Head of caudate nucleus (tissue), 42 donors: ENCODE measurements at regions of chr3 and their contacts with region 1.

Region 1: GRCh38 chr3:13884851-13885703 is 5.2 kb upstream of the WNT7A start:
- DNase-seq: peak in 33 of 42 donors; percentile 26 to 85 (median 59)

Region 2: DNA sequence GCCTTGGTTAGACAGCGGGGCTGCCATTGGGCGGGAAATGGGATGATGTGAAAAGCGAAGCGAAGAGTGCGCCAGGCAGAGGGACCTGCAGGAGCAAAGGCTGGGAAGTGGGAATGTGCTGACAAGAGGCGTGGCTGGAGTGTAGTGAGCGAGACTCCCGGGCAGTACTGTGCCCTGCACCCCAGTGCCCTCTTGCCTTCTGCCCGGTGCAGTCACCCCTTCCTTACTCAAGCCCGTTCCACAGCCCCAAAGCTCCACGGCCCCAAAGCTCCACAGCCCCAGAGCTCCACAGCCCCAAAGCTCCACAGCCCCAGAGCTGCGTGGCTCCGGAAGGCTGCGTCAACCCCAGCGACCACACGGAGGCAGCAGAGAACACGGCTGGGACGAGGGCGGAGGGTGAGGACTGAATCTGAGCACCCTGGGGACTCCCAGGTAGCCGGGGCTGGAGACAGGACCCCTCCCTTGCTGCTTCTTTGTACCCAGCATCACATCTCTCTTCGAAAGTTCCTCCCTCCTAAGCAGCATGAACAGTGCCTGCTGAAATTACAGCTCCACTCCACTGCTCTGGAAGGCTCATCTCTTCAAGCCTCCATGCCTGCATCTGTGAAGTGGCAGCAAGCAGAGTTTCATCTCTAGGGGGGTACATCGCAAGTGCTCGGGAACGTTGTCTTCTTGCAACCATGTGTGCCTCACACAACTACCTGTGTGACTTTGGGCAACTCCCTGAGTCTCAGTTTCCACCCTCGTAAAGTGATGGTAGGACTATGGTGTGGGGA is 227.2 kb before region 1 on chr3:
- intact Hi-C with region 1: loop called (anchors 5 kb)
- DNase-seq: peak; percentile 20 to 86 (median 74)

Region 3: GRCh38 chr3:14248849-14249523 is 363.9 kb after region 1 on chr3:
- intact Hi-C with region 1: no loop called
- DNase-seq: peak in 31 of 42 donors; percentile 5 to 75 (median 40)